CD8-positive, alpha-beta T cell (primary cell): ENCODE measurements at regions of chr15 and their contacts with region 1.

Region 1: DNA sequence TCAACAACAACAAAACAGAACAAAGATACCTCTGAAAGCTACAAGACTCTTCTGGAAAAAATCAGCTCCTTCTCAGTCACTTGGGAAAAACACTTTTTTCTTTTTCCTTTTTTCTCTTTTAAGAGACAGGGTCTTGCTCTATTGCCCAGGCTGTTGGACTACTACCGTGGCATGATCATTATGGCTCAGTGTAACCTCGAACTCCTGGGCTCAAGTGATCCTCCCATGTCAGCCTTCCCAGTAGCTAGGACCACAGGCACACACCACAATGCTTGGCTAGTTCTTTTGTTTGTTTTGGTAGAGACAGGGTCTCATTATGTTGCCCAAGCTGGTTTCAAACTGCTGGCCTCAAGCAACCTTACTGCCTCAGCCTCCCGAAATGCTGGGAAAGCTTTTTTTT is 12.8 kb downstream of the MYO9A start:
- DNase-seq: no peak
- ATAC-seq: no peak
- H3K4me3 ChIP-seq: no peak overlapping the region
- H3K4me3 Mint-ChIP-seq: no peak overlapping the region
- H3K27ac ChIP-seq: no peak overlapping the region
- H3K27ac Mint-ChIP-seq: no peak overlapping the region
- H3K4me1 ChIP-seq: no peaks in the 10 kb centered on the region
- H3K4me1 Mint-ChIP-seq: peaks cover 19% of the 10 kb centered on the region
- H3K27me3 ChIP-seq: no peaks in the 10 kb centered on the region
- H3K27me3 Mint-ChIP-seq: no peaks in the 10 kb centered on the region
- CTCF ChIP-seq: no peak

Region 2: GRCh38 chr15:72136170-72137051 is 31.3 kb after region 1 on chr15:
- CTCF ChIA-PET with region 1: no interaction called
- POLR2A ChIA-PET with region 1: no interaction called
- intact Hi-C with region 1: loop called in 1 of 2 experiments (anchors 2 kb)
- DNase-seq: no peak
- ATAC-seq: no peak
- H3K4me3 ChIP-seq: no peak overlapping the region
- H3K4me3 Mint-ChIP-seq: no peak overlapping the region
- H3K27ac ChIP-seq: no peak overlapping the region
- H3K27ac Mint-ChIP-seq: no peak overlapping the region
- H3K4me1 ChIP-seq: no peaks in the 10 kb centered on the region
- H3K4me1 Mint-ChIP-seq: no peaks in the 10 kb centered on the region
- H3K27me3 ChIP-seq: no peaks in the 10 kb centered on the region
- H3K27me3 Mint-ChIP-seq: no peaks in the 10 kb centered on the region
- CTCF ChIP-seq: no peak

Region 3: GRCh38 chr15:72147418-72147817 is 42.3 kb after region 1 on chr15:
- CTCF ChIA-PET with region 1: no interaction called
- POLR2A ChIA-PET with region 1: no interaction called
- intact Hi-C with region 1: no loop called
- DNase-seq: no peak
- ATAC-seq: no peak
- H3K4me3 ChIP-seq: no peak overlapping the region
- H3K4me3 Mint-ChIP-seq: no peak overlapping the region
- H3K27ac ChIP-seq: no peak overlapping the region
- H3K27ac Mint-ChIP-seq: no peak overlapping the region
- H3K4me1 ChIP-seq: no peaks in the 10 kb centered on the region
- H3K4me1 Mint-ChIP-seq: no peaks in the 10 kb centered on the region
- H3K27me3 ChIP-seq: no peaks in the 10 kb centered on the region
- H3K27me3 Mint-ChIP-seq: no peaks in the 10 kb centered on the region
- CTCF ChIP-seq: no peak

Region 4: DNA sequence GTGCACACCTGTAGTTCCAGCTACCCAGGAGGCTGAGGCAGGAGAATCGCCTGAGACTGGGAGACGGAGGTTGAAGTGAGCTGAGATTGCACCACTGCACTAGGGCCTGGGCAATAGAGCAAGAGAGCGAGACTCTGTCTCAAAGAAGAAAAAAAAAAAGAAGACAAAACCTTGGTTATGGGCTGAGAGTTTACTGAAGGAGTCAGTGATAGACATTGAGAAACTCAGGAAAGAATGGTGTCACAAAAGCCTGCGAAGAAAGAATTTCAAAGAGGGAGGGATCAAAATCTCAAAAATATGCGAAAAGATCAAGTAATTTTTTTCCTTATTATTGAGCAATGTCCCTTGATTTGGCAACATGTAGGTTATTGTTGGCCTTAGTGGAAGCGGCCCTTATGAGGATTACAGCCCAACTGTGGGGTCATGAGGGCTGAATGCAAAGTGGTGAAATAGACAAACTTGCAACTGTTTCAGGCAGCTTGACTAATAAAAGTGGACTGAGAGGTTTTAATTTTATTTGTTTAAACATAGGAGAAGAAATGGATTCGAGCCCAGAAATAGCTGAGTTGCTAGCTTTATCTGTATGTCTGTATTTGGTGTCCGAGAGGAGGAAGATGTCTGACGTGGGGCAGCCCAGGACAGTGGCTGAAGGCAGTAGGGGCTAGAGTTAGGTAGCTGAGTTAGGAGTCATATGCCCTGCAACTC is 233.7 kb after region 1 on chr15:
- CTCF ChIA-PET with region 1: no interaction called
- POLR2A ChIA-PET with region 1: no interaction called
- intact Hi-C with region 1: no loop called
- DNase-seq: no peak
- ATAC-seq: no peak
- H3K4me3 ChIP-seq: no peak overlapping the region
- H3K4me3 Mint-ChIP-seq: no peak overlapping the region
- H3K27ac ChIP-seq: no peak overlapping the region
- H3K27ac Mint-ChIP-seq: no peak overlapping the region
- H3K4me1 ChIP-seq: no peaks in the 10 kb centered on the region
- H3K4me1 Mint-ChIP-seq: no peaks in the 10 kb centered on the region
- H3K27me3 ChIP-seq: no peaks in the 10 kb centered on the region
- H3K27me3 Mint-ChIP-seq: no peaks in the 10 kb centered on the region
- CTCF ChIP-seq: no peak

Region 5: DNA sequence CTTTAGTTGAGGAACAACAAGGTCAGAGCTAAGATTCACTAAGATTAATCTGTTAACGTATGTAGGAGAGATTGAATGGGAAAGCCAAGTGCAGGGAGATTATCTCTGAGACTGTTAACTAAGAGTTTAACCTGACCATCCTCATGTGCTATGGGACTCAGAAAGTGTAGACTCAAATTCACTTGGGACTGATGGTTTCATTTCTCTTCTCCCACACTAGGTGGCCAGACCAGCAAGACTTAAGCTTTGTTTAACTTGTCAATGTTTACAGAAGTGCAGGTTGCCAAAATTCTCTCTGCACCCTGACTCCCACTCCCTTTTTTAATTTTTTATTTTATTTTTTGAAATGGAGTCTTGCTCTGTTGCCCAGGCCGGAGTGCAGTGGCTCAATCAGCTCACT is 277.0 kb after region 1 on chr15:
- CTCF ChIA-PET with region 1: no interaction called
- POLR2A ChIA-PET with region 1: no interaction called
- intact Hi-C with region 1: no loop called
- DNase-seq: no peak
- ATAC-seq: no peak
- H3K4me3 ChIP-seq: no peak overlapping the region
- H3K4me3 Mint-ChIP-seq: no peak overlapping the region
- H3K27ac ChIP-seq: no peak overlapping the region
- H3K27ac Mint-ChIP-seq: no peak overlapping the region
- H3K4me1 ChIP-seq: peaks cover 7% of the 10 kb centered on the region
- H3K4me1 Mint-ChIP-seq: peaks cover 11% of the 10 kb centered on the region
- H3K27me3 ChIP-seq: no peaks in the 10 kb centered on the region
- H3K27me3 Mint-ChIP-seq: peaks cover 6% of the 10 kb centered on the region
- CTCF ChIP-seq: no peak